ENCODE measurements at regions of chr1 and their contacts with region 1.

Region 1: GRCh38 chr1:113835642-113836307 is 23.5 kb upstream of the RSBN1 start:
- DNase-seq: no peak
- H3K4me3 Mint-ChIP-seq: no peak overlapping the region
- H3K27ac Mint-ChIP-seq: peak overlapping the region; percentile 14
- H3K4me1 Mint-ChIP-seq: peaks cover 8% of the 10 kb centered on the region
- H3K27me3 Mint-ChIP-seq: no peaks in the 10 kb centered on the region

Region 2: DNA sequence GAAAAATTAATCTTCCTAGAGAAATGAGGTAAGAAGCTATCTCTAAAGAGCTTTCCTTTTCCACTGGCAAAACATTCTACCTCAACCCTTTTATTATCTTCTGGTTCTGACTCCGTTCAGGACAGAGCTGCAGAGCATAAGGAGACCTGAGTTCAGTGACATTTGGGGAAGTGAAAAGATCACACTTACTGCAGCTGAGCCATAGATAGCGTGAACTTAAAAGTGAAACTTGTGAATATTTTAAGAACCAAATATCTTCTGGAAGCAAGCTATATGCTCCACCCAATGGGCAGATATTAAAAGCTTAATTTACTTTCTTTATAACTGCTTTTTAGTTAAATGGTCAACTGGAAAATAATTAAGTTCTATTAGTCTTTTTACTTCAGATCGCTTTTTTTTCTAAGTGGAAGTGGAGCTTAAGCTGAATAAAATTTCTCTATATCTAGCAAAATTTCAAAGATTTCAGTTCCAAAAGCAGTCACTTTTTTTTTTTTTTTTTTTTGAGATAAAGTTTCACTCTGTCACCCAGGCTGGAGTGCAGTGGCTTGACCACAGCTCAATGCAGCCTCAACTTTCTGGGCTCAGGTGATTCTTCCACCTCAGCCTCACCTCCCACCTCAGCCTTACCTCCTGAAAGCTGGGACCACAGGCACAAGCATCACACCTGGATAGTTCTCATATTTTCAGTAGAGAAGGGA is 23.9 kb after region 1 on chr1:
- CTCF ChIA-PET with region 1: interaction called, 10 read pairs
- POLR2A ChIA-PET with region 1: no interaction called
- DNase-seq: no peak
- H3K4me3 Mint-ChIP-seq: no peak overlapping the region
- H3K27ac Mint-ChIP-seq: peak overlapping the region; percentile 64
- H3K4me1 Mint-ChIP-seq: peaks cover 50% of the 10 kb centered on the region
- H3K27me3 Mint-ChIP-seq: no peaks in the 10 kb centered on the region

Region 3: GRCh38 chr1:113963281-113963906 is 127.6 kb after region 1 on chr1:
- CTCF ChIA-PET with region 1: interaction called, 14 read pairs
- POLR2A ChIA-PET with region 1: no interaction called
- DNase-seq: no peak
- H3K4me3 Mint-ChIP-seq: no peak overlapping the region
- H3K27ac Mint-ChIP-seq: no peak overlapping the region
- H3K4me1 Mint-ChIP-seq: peaks cover 5% of the 10 kb centered on the region
- H3K27me3 Mint-ChIP-seq: no peaks in the 10 kb centered on the region

Measured in activated CD4-positive, alpha-beta memory T cell treated with anti-CD3 and anti-CD28 coated beads, Interleukin-2, amount 10 ng/mL, durations not matched to agents 7 days and 5 days (primary cell).